Heart left ventricle (tissue), 16 donors: ENCODE measurements at regions of chr13 and their contacts with region 1.

Region 1: GRCh38 chr13:96700657-96701056 is 293.6 kb downstream of the OXGR1 start:
- DNase-seq: no peak
- ATAC-seq: no peak
- H3K4me3 ChIP-seq: no peak overlapping the region
- H3K27ac ChIP-seq: no peak overlapping the region
- H3K4me1 ChIP-seq: no peaks in the 10 kb centered on the region
- H3K27me3 ChIP-seq: no peaks in the 10 kb centered on the region
- CTCF ChIP-seq: no peak
- POLR2A ChIP-seq: no peak

Region 2: DNA sequence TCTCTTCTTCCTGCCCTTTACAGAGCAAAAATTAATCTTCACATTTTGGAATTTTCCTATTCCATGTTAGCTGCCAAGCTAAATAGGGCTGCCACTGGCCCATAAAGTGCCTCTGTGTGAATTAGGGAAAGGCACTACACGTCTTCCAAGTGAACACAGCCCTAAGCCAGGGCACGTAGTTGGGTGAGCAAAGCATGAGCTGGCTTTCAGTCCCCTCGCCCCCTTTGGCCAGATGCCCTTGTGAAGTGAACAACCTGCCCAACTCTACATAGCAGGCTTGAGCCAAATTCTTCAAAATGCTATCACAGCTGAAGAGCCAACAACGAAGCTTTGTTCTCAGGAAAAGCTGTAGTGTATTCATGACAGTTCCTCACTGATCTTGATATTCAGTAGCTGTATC is 80.5 kb after region 1 on chr13:
- intact Hi-C with region 1: loop called in 1 of 10 experiments (anchors 2 kb)
- DNase-seq: peak in 1 of 5 donors; percentile 30
- ATAC-seq: peak in 1 of 4 donors; percentile 49
- H3K4me3 ChIP-seq: no peak overlapping the region
- H3K27ac ChIP-seq: no peak overlapping the region
- H3K4me1 ChIP-seq: peaks cover 0 to 6% (median 0%) of the 10 kb centered on the region in 12 donors
- H3K27me3 ChIP-seq: no peaks in the 10 kb centered on the region
- CTCF ChIP-seq: no peak
- POLR2A ChIP-seq: no peak

Region 3: DNA sequence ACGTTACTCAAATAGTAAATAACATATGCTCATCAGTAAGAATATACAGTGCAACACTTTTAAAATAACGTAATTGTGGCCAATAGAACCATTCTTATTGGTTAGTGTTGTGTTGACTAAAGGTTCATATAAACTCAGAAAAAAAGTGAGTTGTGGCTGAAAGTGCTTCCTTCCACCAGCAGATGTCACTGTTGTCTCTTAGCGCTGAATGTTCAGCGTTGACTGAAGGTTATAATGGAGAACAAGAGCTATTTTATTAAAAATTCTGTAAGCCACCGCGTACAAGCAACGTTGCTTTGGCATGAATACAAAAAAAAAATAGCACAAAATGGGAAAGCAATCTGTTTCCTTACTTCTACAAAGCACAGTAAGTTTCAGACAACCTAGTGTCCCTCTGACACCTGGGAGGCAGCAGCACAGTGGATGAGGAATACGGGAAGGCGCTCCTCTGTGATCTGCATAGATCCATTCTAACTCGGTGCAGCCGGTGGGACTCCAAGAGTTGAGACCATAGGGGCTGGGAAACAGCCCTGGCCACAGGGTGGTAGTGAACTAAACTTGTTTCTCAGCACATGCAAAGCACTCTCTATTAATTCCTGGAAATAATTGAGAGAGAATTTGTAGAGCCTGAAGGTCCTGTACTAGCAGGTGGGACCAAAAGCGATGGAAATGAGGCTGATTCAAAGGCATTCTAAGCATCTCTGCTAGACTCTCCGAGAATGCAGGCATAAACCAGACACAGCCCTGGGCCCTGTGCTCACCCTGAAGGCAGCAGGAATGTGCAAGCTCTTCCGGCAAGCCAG is 317.6 kb after region 1 on chr13:
- intact Hi-C with region 1: no loop called
- DNase-seq: peak in 2 of 5 donors; percentile 20 to 27
- ATAC-seq: peak; percentile 51 to 71 (median 59)
- H3K4me3 ChIP-seq: no peak overlapping the region
- H3K27ac ChIP-seq: no peak overlapping the region
- H3K4me1 ChIP-seq: peaks cover 0 to 5% (median 0%) of the 10 kb centered on the region in 12 donors
- H3K27me3 ChIP-seq: peaks cover 0 to 13% (median 0%) of the 10 kb centered on the region in 9 donors
- CTCF ChIP-seq: peak; percentile 83 to 93 (median 88)
- POLR2A ChIP-seq: no peak